Activated naive CD4-positive, alpha-beta T cell treated with anti-CD3 and anti-CD28 coated beads for 36 hours (primary cell): ENCODE measurements at regions of chr3 and their contacts with region 1.

Region 1: DNA sequence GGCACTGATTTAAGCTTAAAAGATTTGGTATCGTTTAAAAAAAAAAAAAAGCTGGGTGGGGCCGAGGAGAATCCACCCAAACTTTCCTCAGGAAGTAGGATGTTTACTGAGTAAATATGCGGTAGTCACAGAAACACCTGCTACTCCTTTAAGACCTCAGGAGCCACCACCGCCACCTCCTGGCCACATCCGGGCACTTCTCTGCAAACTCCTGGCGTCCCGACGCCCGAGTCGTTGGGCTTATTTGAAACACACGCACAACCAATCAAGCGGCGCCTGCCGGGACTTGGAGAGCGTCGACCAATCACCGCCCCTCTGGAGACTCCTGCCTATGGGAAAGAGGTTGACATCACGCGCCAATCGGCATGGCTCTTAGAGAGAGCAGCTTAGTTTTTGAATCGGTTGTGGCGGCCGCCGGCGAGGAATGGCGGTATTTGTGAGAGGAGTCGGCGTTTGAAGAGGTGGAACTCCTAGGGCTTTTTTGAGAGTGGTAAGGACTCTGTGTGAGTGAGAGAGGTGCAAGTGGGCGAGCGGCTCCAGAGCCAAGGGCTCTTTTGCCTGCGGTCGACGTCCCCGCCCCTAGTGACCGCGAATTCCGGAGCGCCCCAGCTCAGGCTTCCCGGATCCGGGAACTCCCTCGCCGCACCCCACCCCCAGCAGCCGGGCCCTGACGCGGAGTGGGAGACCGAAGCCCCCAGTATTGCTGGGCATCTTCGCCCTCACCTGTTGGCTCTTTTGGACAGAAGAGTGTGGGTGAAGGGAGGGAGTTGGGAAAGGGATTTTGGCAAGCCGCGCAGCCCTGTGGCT is at the start of gene ECT2:
- DNase-seq: peak; percentile 100
- H3K4me3 Mint-ChIP-seq: peak within 1 kb of the TSS; percentile 99
- H3K27ac Mint-ChIP-seq: peak within 1 kb of the TSS; percentile 94
- H3K4me1 Mint-ChIP-seq: peaks cover 13% of the 10 kb centered on the region
- H3K27me3 Mint-ChIP-seq: no peaks in the 10 kb centered on the region
- total RNA-seq, gene ECT2: 55.3 to 59.4 TPM

Region 2: GRCh38 chr3:171846597-171846996 is 904.0 kb before region 1 on chr3:
- CTCF ChIA-PET with region 1: no interaction called
- intact Hi-C with region 1: loop called (anchors 2 kb)
- DNase-seq: peak; percentile 32
- H3K4me3 Mint-ChIP-seq: no peak overlapping the region
- H3K27ac Mint-ChIP-seq: no peak overlapping the region
- H3K4me1 Mint-ChIP-seq: peaks cover 18% of the 10 kb centered on the region
- H3K27me3 Mint-ChIP-seq: peaks cover 1% of the 10 kb centered on the region

Region 3: GRCh38 chr3:172332256-172333041 is 418.1 kb before region 1 on chr3:
- CTCF ChIA-PET with region 1: no interaction called
- intact Hi-C with region 1: loop called (anchors 2 kb)
- DNase-seq: peak; percentile 72
- H3K4me3 Mint-ChIP-seq: no peak overlapping the region
- H3K27ac Mint-ChIP-seq: no peak overlapping the region
- H3K4me1 Mint-ChIP-seq: peaks cover 4% of the 10 kb centered on the region
- H3K27me3 Mint-ChIP-seq: no peaks in the 10 kb centered on the region

Region 4: GRCh38 chr3:172562871-172563863 is 187.4 kb before region 1 on chr3:
- CTCF ChIA-PET with region 1: no interaction called
- intact Hi-C with region 1: loop called (anchors 1 kb)
- DNase-seq: peak; percentile 71
- H3K4me3 Mint-ChIP-seq: peak overlapping the region; percentile 11
- H3K27ac Mint-ChIP-seq: peak overlapping the region; percentile 82
- H3K4me1 Mint-ChIP-seq: peaks cover 37% of the 10 kb centered on the region
- H3K27me3 Mint-ChIP-seq: no peaks in the 10 kb centered on the region

Region 5: DNA sequence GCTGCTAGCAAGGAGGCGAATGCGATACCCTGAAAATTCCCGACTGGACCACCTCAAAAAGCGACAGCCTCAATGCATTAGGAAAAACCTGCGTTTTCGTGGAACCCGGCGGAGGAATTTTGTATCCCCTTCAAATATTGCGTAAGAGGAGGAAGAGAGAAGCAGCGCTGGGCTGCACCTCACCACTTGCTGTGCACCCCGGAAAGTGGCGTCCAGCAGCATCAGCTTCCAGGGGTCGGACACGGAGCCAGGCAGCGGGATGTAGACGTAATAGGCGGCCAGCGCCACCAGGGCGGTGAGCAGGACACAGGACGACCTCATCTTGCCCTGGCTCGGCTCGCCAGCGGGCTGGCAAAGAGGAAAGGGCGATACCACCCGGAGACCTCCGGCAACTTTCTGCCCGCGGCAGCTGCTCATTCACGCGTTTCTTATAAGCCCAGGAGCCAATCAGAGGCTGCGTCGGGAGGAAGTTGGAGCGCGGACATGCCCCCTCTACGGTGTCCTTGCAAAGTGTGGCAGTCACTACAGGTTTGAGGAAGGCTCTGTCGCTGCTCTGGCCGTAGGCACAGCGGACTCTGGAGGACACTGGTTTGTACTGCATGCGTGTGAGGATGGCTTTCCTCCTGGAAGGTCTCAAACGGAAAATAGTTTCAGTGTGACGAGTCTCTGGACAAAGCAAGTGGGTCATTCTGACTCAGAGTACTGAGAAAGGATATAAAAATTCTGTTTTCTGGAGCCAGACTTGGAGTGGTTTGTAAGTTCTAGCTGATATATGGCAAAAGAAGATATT is 39.7 kb before region 1 on chr3 and contains the start of gene NCEH1:
- CTCF ChIA-PET with region 1: interaction called, 3 read pairs
- intact Hi-C with region 1: loop called (anchors 1 kb)
- DNase-seq: peak; percentile 85
- H3K4me3 Mint-ChIP-seq: peak within 1 kb of the TSS; percentile 91
- H3K27ac Mint-ChIP-seq: no peak within 1 kb of the TSS
- H3K4me1 Mint-ChIP-seq: peaks cover 11% of the 10 kb centered on the region
- H3K27me3 Mint-ChIP-seq: no peaks in the 10 kb centered on the region
- total RNA-seq, gene NCEH1: 2.9 to 3.5 TPM